ENCODE measurements at regions of chr5 and their contacts with region 1.

Region 1: DNA sequence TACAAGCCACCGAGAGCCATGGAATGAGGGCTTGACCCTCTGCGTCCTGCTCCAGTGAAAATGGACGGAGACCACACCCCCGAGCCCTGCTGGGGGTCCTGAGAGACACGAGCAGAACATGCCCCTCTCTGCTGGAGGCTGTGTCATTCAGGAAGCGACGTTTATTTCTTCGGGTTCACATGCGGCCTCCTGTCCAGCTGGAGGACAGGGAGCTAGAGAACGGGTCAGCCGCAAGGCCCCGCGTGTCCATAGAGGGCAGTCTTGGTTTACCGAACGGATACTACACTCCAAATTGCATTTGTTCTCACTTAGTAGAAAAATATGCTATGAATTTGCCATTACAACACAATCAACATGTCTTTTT is 36.1 kb downstream of the MRPL36 start:
- DNase-seq: peak; percentile 82
- H3K4me3 Mint-ChIP-seq: no peak overlapping the region
- H3K27ac Mint-ChIP-seq: no peak overlapping the region
- H3K4me1 Mint-ChIP-seq: no peaks in the 10 kb centered on the region
- H3K27me3 Mint-ChIP-seq: peaks cover 6% of the 10 kb centered on the region

Region 2: GRCh38 chr5:1799602-1800471 is 36.3 kb after region 1 on chr5 and contains the start of gene MRPL36:
- intact Hi-C with region 1: loop called (anchors 5 kb)
- DNase-seq: peak; percentile 97
- H3K4me3 Mint-ChIP-seq: peak within 1 kb of the TSS; percentile 90
- H3K27ac Mint-ChIP-seq: peak within 1 kb of the TSS; percentile 93
- H3K4me1 Mint-ChIP-seq: peaks cover 49% of the 10 kb centered on the region
- H3K27me3 Mint-ChIP-seq: no peaks in the 10 kb centered on the region
- total RNA-seq, gene MRPL36: 107 and 108 TPM in 2 replicates

Region 3: GRCh38 chr5:1867114-1867814 is 103.7 kb after region 1 on chr5:
- intact Hi-C with region 1: loop called (anchors 10 kb)
- DNase-seq: no peak
- H3K4me3 Mint-ChIP-seq: no peak overlapping the region
- H3K27ac Mint-ChIP-seq: no peak overlapping the region
- H3K4me1 Mint-ChIP-seq: peaks cover 2% of the 10 kb centered on the region
- H3K27me3 Mint-ChIP-seq: no peaks in the 10 kb centered on the region

Region 4: GRCh38 chr5:2017540-2018389 is 254.2 kb after region 1 on chr5:
- intact Hi-C with region 1: loop called (anchors 1 kb)
- DNase-seq: peak; percentile 76
- H3K4me3 Mint-ChIP-seq: no peak overlapping the region
- H3K27ac Mint-ChIP-seq: no peak overlapping the region
- H3K4me1 Mint-ChIP-seq: no peaks in the 10 kb centered on the region
- H3K27me3 Mint-ChIP-seq: no peaks in the 10 kb centered on the region

Region 5: GRCh38 chr5:2038321-2039179 is 275.0 kb after region 1 on chr5:
- intact Hi-C with region 1: loop called (anchors 1 kb)
- DNase-seq: peak; percentile 88
- H3K4me3 Mint-ChIP-seq: peak overlapping the region; percentile 77
- H3K27ac Mint-ChIP-seq: no peak overlapping the region
- H3K4me1 Mint-ChIP-seq: no peaks in the 10 kb centered on the region
- H3K27me3 Mint-ChIP-seq: peaks cover 18% of the 10 kb centered on the region